A673 (cell line): ENCODE measurements at regions of chr10 and their contacts with region 1.

Region 1: GRCh38 chr10:24952707-24953645 is 570 bp upstream of the PRTFDC1 start:
- DNase-seq: peak; percentile 78
- H3K4me3 ChIP-seq: peak overlapping the region; percentile 57
- H3K27ac ChIP-seq: peak overlapping the region; percentile 91
- H3K4me1 ChIP-seq: peaks cover 23% of the 10 kb centered on the region
- H3K27me3 ChIP-seq: no peaks in the 10 kb centered on the region
- CTCF ChIP-seq: peak; percentile 39

Region 2: DNA sequence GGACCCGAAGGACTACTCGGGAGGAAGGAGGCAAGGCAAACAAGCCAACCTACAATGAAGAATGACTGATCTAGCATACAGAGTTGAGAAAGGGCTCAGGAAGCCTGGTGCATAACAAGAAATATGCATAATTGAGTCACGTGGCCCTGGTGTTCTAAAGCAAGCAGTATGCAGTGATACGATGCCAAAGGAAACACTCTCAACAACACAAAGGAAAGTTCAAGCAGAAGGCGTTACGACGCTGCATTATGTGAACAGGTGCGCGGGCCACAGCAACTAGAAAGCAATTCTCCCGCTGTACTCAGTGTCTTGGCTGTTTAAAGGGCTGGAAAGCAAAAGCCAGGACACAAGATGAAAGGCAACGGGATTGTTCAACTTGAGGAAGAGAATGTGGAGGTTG is 101.3 kb before region 1 on chr10:
- CTCF ChIA-PET with region 1: no interaction called
- POLR2A ChIA-PET with region 1: no interaction called
- intact Hi-C with region 1: no loop called
- DNase-seq: peak; percentile 74
- H3K4me3 ChIP-seq: no peak overlapping the region
- H3K27ac ChIP-seq: peak overlapping the region; percentile 43
- H3K4me1 ChIP-seq: peaks cover 51% of the 10 kb centered on the region
- H3K27me3 ChIP-seq: no peaks in the 10 kb centered on the region
- CTCF ChIP-seq: no peak

Region 3: DNA sequence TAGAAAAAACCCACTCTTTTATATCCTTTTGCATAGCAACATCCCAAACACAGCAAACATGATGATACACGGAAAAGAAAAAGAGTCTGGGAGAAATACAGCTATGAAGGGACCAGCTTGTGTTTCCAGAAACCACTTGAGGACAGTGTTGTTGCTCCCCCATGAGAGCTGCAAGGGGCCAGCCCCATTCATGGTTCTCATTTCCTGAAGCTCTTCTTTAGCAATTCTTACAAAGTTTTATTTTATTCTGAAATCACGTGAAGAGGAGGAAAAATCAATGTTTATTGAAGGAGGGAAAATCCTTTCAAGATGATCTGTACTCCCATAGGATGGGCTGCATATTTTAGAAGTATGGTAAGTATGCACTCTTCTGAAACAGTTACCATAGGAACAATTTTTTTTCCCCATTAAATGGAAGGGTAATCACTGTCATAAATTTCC is 16.9 kb after region 1 on chr10:
- CTCF ChIA-PET with region 1: interaction called, 18 read pairs
- POLR2A ChIA-PET with region 1: no interaction called
- intact Hi-C with region 1: no loop called
- DNase-seq: no peak
- H3K4me3 ChIP-seq: no peak overlapping the region
- H3K27ac ChIP-seq: no peak overlapping the region
- H3K4me1 ChIP-seq: no peaks in the 10 kb centered on the region
- H3K27me3 ChIP-seq: no peaks in the 10 kb centered on the region
- CTCF ChIP-seq: no peak

Region 4: GRCh38 chr10:26251925-26252324 is 1298.9 kb after region 1 on chr10:
- CTCF ChIA-PET with region 1: no interaction called
- POLR2A ChIA-PET with region 1: no interaction called
- intact Hi-C with region 1: no loop called
- DNase-seq: no peak
- H3K4me3 ChIP-seq: no peak overlapping the region
- H3K27ac ChIP-seq: no peak overlapping the region
- H3K4me1 ChIP-seq: no peaks in the 10 kb centered on the region
- H3K27me3 ChIP-seq: no peaks in the 10 kb centered on the region
- CTCF ChIP-seq: no peak